HEK293 (cell line): ENCODE measurements at regions of chr6 and their contacts with region 1.

Region 1: GRCh38 chr6:53986165-53986720 is 125.0 kb upstream of the MLIP start:
- H3K4me3 ChIP-seq: no peak overlapping the region
- H3K27ac ChIP-seq: no peak overlapping the region
- H3K4me1 ChIP-seq: 0 out of 2 replicates have a peak, but pooled peaks cover 3% of the 10 kb centered on the region
- CTCF ChIP-seq: peak; percentile 40; the same call in 1 of the 2 replicates

Region 2: GRCh38 chr6:53975936-53976615 is 10.2 kb before region 1 on chr6:
- CTCF ChIA-PET with region 1: interaction called, 16 read pairs
- POLR2A ChIA-PET with region 1: no interaction called
- H3K4me3 ChIP-seq: no peak overlapping the region
- H3K27ac ChIP-seq: no peak overlapping the region
- H3K4me1 ChIP-seq: no peaks in the 10 kb centered on the region
- CTCF ChIP-seq: no peak

Region 3: GRCh38 chr6:54244430-54244829 is 258.2 kb after region 1 on chr6:
- CTCF ChIA-PET with region 1: interaction called, 37 read pairs
- POLR2A ChIA-PET with region 1: no interaction called
- H3K4me3 ChIP-seq: no peak overlapping the region
- H3K27ac ChIP-seq: no peak overlapping the region
- H3K4me1 ChIP-seq: no peaks in the 10 kb centered on the region
- CTCF ChIP-seq: no peak

Region 4: GRCh38 chr6:54717849-54718455 is 731.7 kb after region 1 on chr6:
- CTCF ChIA-PET with region 1: interaction called, 15 read pairs
- POLR2A ChIA-PET with region 1: no interaction called
- H3K4me3 ChIP-seq: no peak overlapping the region
- H3K27ac ChIP-seq: peak overlapping the region; percentile 61
- H3K4me1 ChIP-seq: peaks cover 11% of the 10 kb centered on the region; the same call in 1 of the 2 replicates
- CTCF ChIP-seq: 0 out of 2 replicates have a peak, but pooled peaks have one; percentile 28

Region 5: DNA sequence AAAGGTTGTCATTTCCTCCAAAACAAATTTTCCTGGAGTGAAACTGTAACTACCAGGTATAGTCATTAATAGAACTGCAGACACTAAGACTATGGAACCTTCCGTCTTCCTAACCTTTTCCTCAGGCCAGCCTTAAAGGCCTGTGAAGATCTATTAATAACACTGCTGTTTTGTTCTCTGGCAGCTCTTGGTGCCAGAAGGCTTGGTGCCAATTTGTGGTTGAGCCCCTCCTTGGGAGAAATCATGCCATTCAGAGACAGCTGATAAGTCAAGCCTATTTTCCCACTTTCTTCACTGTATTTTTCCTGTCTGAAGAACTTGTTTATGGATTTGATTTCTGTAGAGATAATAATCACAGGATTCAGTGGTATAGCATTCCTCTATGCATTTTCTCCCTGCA is 1252.9 kb after region 1 on chr6:
- CTCF ChIA-PET with region 1: interaction called, 10 read pairs
- POLR2A ChIA-PET with region 1: no interaction called
- H3K4me3 ChIP-seq: no peak overlapping the region
- H3K27ac ChIP-seq: no peak overlapping the region
- H3K4me1 ChIP-seq: no peaks in the 10 kb centered on the region
- CTCF ChIP-seq: no peak